ENCODE measurements at regions of chr1 and their contacts with region 1.

Region 1: DNA sequence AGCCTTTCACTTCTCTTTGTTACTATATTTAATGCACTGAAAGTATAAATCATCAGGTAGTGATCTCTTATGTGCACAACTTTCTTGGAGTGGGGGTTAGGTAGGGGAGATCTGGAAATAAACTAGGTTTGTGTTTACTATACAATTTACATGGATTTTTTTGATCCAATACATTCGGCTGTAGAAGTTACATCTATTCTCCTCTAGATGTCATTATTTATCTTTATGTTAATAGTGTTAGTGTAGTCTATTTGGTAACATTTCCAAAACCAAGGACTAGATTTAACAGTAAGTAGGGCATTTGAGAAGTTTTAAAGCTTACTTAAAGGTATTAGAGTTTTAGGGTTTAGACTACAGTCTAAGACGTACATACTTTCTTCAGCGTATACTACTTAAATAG is 5.4 kb downstream of the VPS45 start:
- DNase-seq: no peak
- ATAC-seq: peak; percentile 51

Region 2: DNA sequence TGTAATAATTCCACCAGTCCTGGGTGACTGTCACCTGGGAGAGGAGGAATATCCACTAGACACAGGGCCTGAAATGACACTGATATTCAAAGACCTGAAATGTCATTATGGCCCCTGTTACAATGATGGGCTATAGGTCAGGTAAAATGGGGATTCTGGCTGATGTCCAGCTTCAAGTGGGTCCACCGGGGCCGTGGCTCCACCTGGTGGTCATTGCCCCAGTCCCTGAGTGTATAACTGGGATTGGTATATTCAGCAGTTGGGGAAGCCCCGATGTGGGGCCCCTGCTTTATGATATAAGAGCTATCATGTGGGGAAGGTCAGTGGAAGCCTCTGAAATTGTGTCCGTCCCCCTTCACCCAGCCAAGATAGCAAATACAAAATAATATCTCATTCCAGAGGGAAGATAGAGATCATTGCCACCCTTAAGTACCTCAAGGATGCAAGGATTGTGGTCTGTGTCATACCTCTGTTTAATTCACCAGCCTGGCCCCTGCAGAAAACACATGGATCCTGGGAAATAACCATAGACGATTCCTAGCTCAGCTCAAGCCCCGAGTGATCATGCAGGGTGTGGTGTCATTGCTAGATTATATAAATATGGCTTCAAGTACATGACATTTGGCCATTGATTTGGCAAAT is 96.1 kb after region 1 on chr1:
- intact Hi-C with region 1: loop called in 1 of 2 experiments (anchors 5 kb)
- DNase-seq: peak; percentile 56 to 76
- ATAC-seq: peak; percentile 47